Gastrocnemius medialis (tissue), 4 donors: ENCODE measurements at regions of chr6 and their contacts with region 1.

Region 1: GRCh38 chr6:2634139-2634964 is 116.4 kb downstream of the MYLK4 start:
- DNase-seq: peak; percentile 51 to 56
- ATAC-seq: peak; percentile 80 to 82
- H3K4me3 ChIP-seq: peak overlapping the region; percentile 44 to 72 (median 52)
- H3K27ac ChIP-seq: peak overlapping the region; percentile 29 to 71 (median 46)
- H3K4me1 ChIP-seq: peaks cover 20 to 21% of the 10 kb centered on the region in 2 donors
- H3K27me3 ChIP-seq: no peaks in the 10 kb centered on the region
- CTCF ChIP-seq: peak; percentile 80 to 100 (median 96)
- POLR2A ChIP-seq: no peak

Region 2: DNA sequence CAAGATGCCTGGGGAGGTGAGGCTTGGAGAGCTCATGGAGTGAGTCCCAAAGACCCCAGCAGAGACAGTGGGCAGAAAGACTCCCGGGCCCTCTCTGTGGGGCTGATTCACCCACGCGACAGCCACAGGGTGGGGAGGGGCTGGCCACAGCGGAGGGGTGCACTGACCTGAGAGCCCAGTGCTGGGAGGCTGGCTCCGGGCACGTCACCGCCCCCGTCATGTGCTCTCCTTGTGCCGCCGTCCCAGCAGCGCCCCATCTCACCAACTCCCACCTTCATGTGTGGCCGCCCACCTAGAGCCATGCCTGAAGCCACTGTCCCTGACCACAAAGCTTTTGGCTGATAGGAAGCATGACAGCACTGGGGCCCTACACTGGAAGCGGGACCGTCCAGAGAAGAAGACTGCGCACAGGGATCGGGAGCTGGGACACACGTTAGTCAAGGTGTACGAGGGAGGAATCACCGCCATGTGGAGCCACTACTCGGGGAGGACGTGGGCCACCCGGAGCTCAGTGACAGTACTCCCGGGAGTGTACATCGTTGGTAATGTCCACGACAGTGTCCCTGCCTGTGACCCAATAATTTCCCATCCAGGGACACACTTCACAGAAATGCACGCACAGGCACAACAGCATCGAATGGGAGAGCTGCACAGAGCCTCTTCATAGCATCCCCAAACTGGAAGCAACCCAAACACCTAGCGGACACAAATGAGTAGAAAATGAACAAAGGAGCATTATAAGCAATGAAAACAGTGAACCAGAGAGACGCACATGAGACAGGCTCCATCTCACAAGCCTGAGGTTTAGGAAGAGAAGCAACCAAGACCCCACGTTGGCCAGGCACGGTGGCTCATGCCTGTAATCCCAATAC is 1053.0 kb before region 1 on chr6:
- in situ Hi-C with region 1: loop called in 1 of 4 experiments (anchors 10 kb)
- intact Hi-C with region 1: no loop called
- DNase-seq: no peak
- ATAC-seq: no peak
- H3K4me3 ChIP-seq: no peak overlapping the region
- H3K27ac ChIP-seq: no peak overlapping the region
- H3K4me1 ChIP-seq: no peaks in the 10 kb centered on the region
- H3K27me3 ChIP-seq: no peaks in the 10 kb centered on the region
- CTCF ChIP-seq: no peak
- POLR2A ChIP-seq: no peak

Region 3: GRCh38 chr6:1604158-1605030 is 1030.0 kb before region 1 on chr6:
- in situ Hi-C with region 1: loop called in 2 of 4 experiments (anchors 10 kb)
- intact Hi-C with region 1: loop called (anchors 1 kb)
- DNase-seq: no peak
- ATAC-seq: peak; percentile 77 to 79
- H3K4me3 ChIP-seq: peak overlapping the region; percentile 40 to 67 (median 53)
- H3K27ac ChIP-seq: no peak overlapping the region
- H3K4me1 ChIP-seq: peaks cover 3 to 26% of the 10 kb centered on the region in 2 donors
- H3K27me3 ChIP-seq: peaks cover 62 to 70% (median 66%) of the 10 kb centered on the region in 3 donors
- CTCF ChIP-seq: peak; percentile 78 to 98 (median 95)
- POLR2A ChIP-seq: no peak

Region 4: GRCh38 chr6:2209226-2209809 is 425.0 kb before region 1 on chr6:
- in situ Hi-C with region 1: loop called in 1 of 4 experiments (anchors 25 kb)
- intact Hi-C with region 1: no loop called
- DNase-seq: no peak
- ATAC-seq: peak in 1 of 2 donors; percentile 58
- H3K4me3 ChIP-seq: no peak overlapping the region
- H3K27ac ChIP-seq: no peak overlapping the region
- H3K4me1 ChIP-seq: peaks cover 0 to 3% of the 10 kb centered on the region in 2 donors
- H3K27me3 ChIP-seq: peaks cover 0 to 2% (median 0%) of the 10 kb centered on the region in 3 donors
- CTCF ChIP-seq: peak in 3 of 5 experiments; percentile 11 to 40 (median 22)
- POLR2A ChIP-seq: no peak

Region 5: GRCh38 chr6:2448820-2449571 is 185.4 kb before region 1 on chr6:
- in situ Hi-C with region 1: no loop called
- intact Hi-C with region 1: loop called (anchors 10 kb)
- DNase-seq: no peak
- ATAC-seq: peak in 1 of 2 donors; percentile 33
- H3K4me3 ChIP-seq: no peak overlapping the region
- H3K27ac ChIP-seq: no peak overlapping the region
- H3K4me1 ChIP-seq: peaks cover 4 to 7% of the 10 kb centered on the region in 2 donors
- H3K27me3 ChIP-seq: no peaks in the 10 kb centered on the region
- CTCF ChIP-seq: peak in 4 of 5 experiments; percentile 9 to 54 (median 36)
- POLR2A ChIP-seq: no peak